Caco-2 (cell line): ENCODE measurements at regions of chr20 and their contacts with region 1.

Region 1: GRCh38 chr20:40251284-40251932 is 437.6 kb downstream of the MAFB start:
- DNase-seq: peak; percentile 72 to 80
- H3K4me3 ChIP-seq: no peak overlapping the region
- H3K4me3 Mint-ChIP-seq: no peak overlapping the region
- H3K27ac Mint-ChIP-seq: no peak overlapping the region
- H3K4me1 ChIP-seq: no peaks in the 10 kb centered on the region
- H3K4me1 Mint-ChIP-seq: no peaks in the 10 kb centered on the region
- H3K27me3 ChIP-seq: no peaks in the 10 kb centered on the region
- H3K27me3 Mint-ChIP-seq: peaks cover 14% of the 10 kb centered on the region
- CTCF ChIP-seq: peak; percentile 82 to 87

Region 2: GRCh38 chr20:39885975-39886649 is 365.3 kb before region 1 on chr20:
- CTCF ChIA-PET with region 1: no interaction called
- POLR2A ChIA-PET with region 1: no interaction called
- intact Hi-C with region 1: loop called (anchors 10 kb)
- DNase-seq: peak; percentile 61 to 64
- H3K4me3 ChIP-seq: no peak overlapping the region
- H3K4me3 Mint-ChIP-seq: no peak overlapping the region
- H3K27ac Mint-ChIP-seq: no peak overlapping the region
- H3K4me1 ChIP-seq: no peaks in the 10 kb centered on the region
- H3K4me1 Mint-ChIP-seq: no peaks in the 10 kb centered on the region
- H3K27me3 ChIP-seq: no peaks in the 10 kb centered on the region
- H3K27me3 Mint-ChIP-seq: peaks cover 16% of the 10 kb centered on the region
- CTCF ChIP-seq: peak; percentile 77 to 78

Region 3: GRCh38 chr20:40160097-40160550 is 91.3 kb before region 1 on chr20:
- CTCF ChIA-PET with region 1: interaction called, 7 read pairs
- POLR2A ChIA-PET with region 1: no interaction called
- intact Hi-C with region 1: loop called (anchors 1 kb)
- DNase-seq: peak; percentile 80 to 84
- H3K4me3 ChIP-seq: no peak overlapping the region
- H3K4me3 Mint-ChIP-seq: peak overlapping the region; percentile 22
- H3K27ac Mint-ChIP-seq: no peak overlapping the region
- H3K4me1 ChIP-seq: no peaks in the 10 kb centered on the region
- H3K4me1 Mint-ChIP-seq: no peaks in the 10 kb centered on the region
- H3K27me3 ChIP-seq: no peaks in the 10 kb centered on the region
- H3K27me3 Mint-ChIP-seq: peaks cover 3% of the 10 kb centered on the region
- CTCF ChIP-seq: peak; percentile 98 to 99

Region 4: GRCh38 chr20:40359131-40359903 is 107.9 kb after region 1 on chr20:
- CTCF ChIA-PET with region 1: no interaction called
- POLR2A ChIA-PET with region 1: no interaction called
- intact Hi-C with region 1: no loop called
- DNase-seq: peak in 1 of 2 experiments; percentile 28
- H3K4me3 ChIP-seq: no peak overlapping the region
- H3K4me3 Mint-ChIP-seq: no peak overlapping the region
- H3K27ac Mint-ChIP-seq: no peak overlapping the region
- H3K4me1 ChIP-seq: no peaks in the 10 kb centered on the region; the same call in 1 of the 2 replicates
- H3K4me1 Mint-ChIP-seq: peaks cover 8% of the 10 kb centered on the region
- H3K27me3 ChIP-seq: no peaks in the 10 kb centered on the region; the same call in 1 of the 2 replicates
- H3K27me3 Mint-ChIP-seq: peaks cover 5% of the 10 kb centered on the region
- CTCF ChIP-seq: no peak